Esophagus muscularis mucosa (tissue), 4 donors: ENCODE measurements at regions of chr1 and their contacts with region 1.

Region 1: GRCh38 chr1:90850898-90851710 is 134.0 kb upstream of the BARHL2 start:
- DNase-seq: no peak
- H3K4me3 ChIP-seq: peak overlapping the region; percentile 61 to 88 (median 86)
- H3K27ac ChIP-seq: peak overlapping the region; percentile 16 to 66 (median 45)
- H3K4me1 ChIP-seq: peaks cover 6 to 20% (median 20%) of the 10 kb centered on the region in 4 donors
- H3K27me3 ChIP-seq: no peaks in the 10 kb centered on the region
- CTCF ChIP-seq: peak; percentile 58 to 97 (median 75)
- EP300 ChIP-seq: no peak
- POLR2A ChIP-seq: no peak

Region 2: DNA sequence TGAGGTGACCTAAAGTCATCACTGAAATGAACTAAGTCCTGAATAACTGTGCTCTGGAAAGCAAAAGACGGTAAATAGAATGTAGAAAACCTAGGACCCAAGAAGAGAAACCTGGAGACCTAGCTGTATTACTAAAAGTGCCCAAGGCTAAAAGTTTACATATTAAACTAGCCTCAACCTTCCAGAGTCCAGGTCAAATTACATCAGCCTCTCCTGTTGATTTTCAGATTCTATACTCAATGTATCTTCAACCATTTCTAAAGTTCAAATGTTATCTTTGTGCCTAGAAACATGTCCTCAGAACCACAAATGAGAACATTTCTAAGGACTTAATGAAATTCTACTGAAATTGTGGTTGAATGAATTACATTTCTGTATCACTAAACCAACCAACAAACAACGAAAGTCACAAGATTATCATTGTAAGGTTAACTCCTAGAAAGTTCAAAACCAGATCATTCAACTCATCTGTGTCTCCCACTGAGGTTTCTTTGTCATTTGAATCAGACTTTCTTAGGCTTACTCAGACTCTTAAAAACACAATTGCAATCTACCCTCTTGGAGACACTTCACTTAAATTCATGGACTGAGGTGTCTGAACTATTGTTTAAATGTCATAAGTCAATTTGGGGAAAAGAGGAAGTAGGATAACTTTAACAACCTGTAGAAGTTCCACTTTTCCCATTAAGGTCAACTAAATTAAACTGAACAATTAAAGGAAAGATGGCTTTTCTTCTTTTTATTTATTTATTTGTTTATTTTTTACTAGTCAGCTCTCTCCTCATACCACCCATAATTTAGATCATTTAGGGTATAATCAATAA is 341.7 kb before region 1 on chr1:
- intact Hi-C with region 1: no loop called
- DNase-seq: no peak
- H3K4me3 ChIP-seq: no peak overlapping the region
- H3K27ac ChIP-seq: no peak overlapping the region
- H3K4me1 ChIP-seq: no peaks in the 10 kb centered on the region
- H3K27me3 ChIP-seq: no peaks in the 10 kb centered on the region
- CTCF ChIP-seq: no peak
- EP300 ChIP-seq: no peak
- POLR2A ChIP-seq: no peak

Region 3: DNA sequence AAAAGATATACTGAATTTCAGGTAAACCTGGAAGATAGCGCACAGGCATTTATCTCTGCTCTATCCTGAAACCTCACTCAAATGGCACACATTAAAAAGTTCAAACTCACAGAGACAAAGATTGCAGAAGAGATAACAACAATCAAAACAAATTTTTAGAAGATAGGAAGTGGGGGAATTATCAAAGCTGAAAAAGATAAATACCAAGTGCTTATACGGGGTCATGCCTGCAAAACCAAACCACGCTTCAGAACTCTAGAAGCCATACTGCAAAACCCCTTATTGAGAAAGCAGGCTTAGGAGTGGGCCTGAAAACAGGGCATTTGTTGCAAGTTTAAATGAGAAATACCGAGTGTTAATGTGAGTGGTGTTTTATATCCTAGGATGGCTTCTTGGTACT is 210.8 kb before region 1 on chr1:
- intact Hi-C with region 1: no loop called
- DNase-seq: no peak
- H3K4me3 ChIP-seq: no peak overlapping the region
- H3K27ac ChIP-seq: no peak overlapping the region
- H3K4me1 ChIP-seq: no peaks in the 10 kb centered on the region
- H3K27me3 ChIP-seq: no peaks in the 10 kb centered on the region
- CTCF ChIP-seq: no peak
- EP300 ChIP-seq: no peak
- POLR2A ChIP-seq: no peak

Region 4: GRCh38 chr1:91018006-91018405 is 166.9 kb after region 1 on chr1:
- intact Hi-C with region 1: loop called (anchors 10 kb)
- DNase-seq: no peak
- H3K4me3 ChIP-seq: no peak overlapping the region
- H3K27ac ChIP-seq: peak overlapping the region in 1 of 4 donors; percentile 5
- H3K4me1 ChIP-seq: peaks cover 36 to 78% (median 76%) of the 10 kb centered on the region in 4 donors
- H3K27me3 ChIP-seq: no peaks in the 10 kb centered on the region
- CTCF ChIP-seq: peak; percentile 17 to 46 (median 28)
- EP300 ChIP-seq: no peak
- POLR2A ChIP-seq: no peak